GM23248 (cell line): ENCODE measurements at regions of chr21 and their contacts with region 1.

Region 1: GRCh38 chr21:37700641-37701202 is 215.5 kb downstream of the KCNJ6 start:
- DNase-seq: peak; percentile 84
- H3K4me3 ChIP-seq: no peak overlapping the region
- H3K27ac ChIP-seq: no peak overlapping the region
- H3K4me1 ChIP-seq: no peaks in the 10 kb centered on the region
- H3K27me3 ChIP-seq: peaks cover 13% of the 10 kb centered on the region

Region 2: DNA sequence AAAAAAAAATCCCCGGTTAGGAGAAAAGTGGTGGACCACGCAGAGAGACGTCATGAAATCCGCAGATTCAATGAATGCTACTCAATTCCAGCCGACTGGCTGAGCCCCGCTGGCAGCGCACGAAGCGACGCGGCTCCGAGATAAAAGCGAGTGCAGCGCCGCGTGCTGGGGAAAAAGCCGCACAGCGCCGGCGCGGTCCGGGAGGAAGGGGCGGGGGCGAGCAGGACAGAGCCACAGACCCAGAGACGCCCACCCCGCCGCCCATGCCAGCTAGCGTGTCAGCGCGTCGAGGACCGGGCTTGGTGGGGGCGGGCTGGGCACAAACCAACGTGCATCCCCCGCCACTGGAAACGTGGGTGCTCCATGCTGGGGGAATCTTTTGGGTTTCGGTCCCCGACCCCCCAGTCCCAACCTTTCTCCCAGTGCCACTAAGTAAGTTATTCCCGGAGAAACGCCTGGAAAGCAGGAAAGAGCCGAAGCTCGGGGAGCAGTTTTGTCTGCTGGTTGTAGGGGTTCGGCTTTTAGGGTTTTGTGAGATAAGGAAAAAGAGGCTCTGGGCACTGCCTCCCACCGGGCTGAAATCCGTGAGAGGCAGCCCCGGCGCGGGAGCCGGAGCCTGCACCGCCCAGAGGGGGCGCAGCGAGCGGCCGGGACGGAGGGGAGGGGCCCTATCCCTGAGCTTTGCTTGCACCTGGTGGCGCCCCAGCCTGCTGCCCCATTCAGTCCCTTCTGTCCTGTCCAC is 215.8 kb after region 1 on chr21 and contains the start of gene KCNJ6:
- in situ Hi-C with region 1: loop called (anchors 25 kb)
- DNase-seq: peak; percentile 82
- H3K4me3 ChIP-seq: peak within 1 kb of the TSS; percentile 72
- H3K27ac ChIP-seq: no peak within 1 kb of the TSS
- H3K4me1 ChIP-seq: peaks cover 12% of the 10 kb centered on the region; the same call in 1 of the 2 replicates
- H3K27me3 ChIP-seq: peaks cover 22% of the 10 kb centered on the region
- total RNA-seq, gene KCNJ6: 0.13 TPM in 1 of 2 replicates, not detected in the other

Region 3: GRCh38 chr21:38363693-38364092 is 663.0 kb after region 1 on chr21:
- in situ Hi-C with region 1: loop called (anchors 10 kb)
- DNase-seq: no peak
- H3K4me3 ChIP-seq: no peak overlapping the region
- H3K27ac ChIP-seq: no peak overlapping the region
- H3K4me1 ChIP-seq: no peaks in the 10 kb centered on the region
- H3K27me3 ChIP-seq: no peaks in the 10 kb centered on the region